ENCODE measurements at regions of chr7 and their contacts with region 1.

Region 1: DNA sequence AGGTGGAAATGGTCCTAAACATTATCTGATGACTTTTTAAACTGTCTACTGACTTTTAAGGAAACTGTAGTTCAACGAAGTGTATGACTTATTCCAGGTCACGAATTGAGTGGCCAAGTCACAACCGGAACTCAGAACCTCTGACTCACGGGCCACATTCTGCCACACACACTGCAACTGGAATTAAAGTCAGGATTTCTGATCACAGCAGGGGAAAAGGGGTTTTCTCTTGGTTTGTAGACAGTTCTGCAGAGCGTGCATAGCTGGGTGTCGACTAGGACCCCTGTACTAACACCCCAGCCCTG is 20.0 kb upstream of the INSIG1 start:
- DNase-seq: no peak
- ATAC-seq: no peak
- H3K4me3 ChIP-seq: no peak overlapping the region
- H3K4me3 Mint-ChIP-seq: no peak overlapping the region
- H3K27ac ChIP-seq: no peak overlapping the region
- H3K27ac Mint-ChIP-seq: no peak overlapping the region
- H3K4me1 ChIP-seq: no peaks in the 10 kb centered on the region
- H3K4me1 Mint-ChIP-seq: peaks cover 2 to 3% (median 3%) of the 10 kb centered on the region in 3 donors
- H3K27me3 ChIP-seq: peaks cover 0 to 28% of the 10 kb centered on the region in 2 experiments
- H3K27me3 Mint-ChIP-seq: peaks cover 0 to 7% of the 10 kb centered on the region in 2 donors

Region 2: DNA sequence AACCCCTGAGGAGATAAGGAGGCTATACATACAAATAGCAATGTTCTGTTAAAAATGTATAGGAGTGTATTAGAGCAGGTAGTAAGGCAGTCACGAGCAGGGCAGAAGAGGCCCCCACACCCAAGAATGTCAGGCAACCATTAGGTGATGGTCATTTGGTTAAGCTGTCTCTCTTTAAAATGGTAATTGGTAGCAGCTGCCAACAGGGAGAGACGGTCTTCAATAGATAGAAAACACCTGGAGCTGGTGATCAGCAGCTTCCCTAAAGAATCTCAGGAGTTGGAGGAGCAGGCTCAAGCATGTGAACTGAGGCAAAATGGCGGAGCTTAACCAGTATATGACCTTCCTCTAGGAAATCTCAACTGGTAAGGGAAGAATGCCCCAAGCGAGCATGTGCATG is 233.9 kb before region 1 on chr7:
- CTCF ChIA-PET with region 1: no interaction called
- POLR2A ChIA-PET with region 1: no interaction called
- DNase-seq: no peak
- ATAC-seq: no peak
- H3K4me3 ChIP-seq: no peak overlapping the region
- H3K4me3 Mint-ChIP-seq: no peak overlapping the region
- H3K27ac ChIP-seq: no peak overlapping the region
- H3K27ac Mint-ChIP-seq: no peak overlapping the region
- H3K4me1 ChIP-seq: no peaks in the 10 kb centered on the region
- H3K4me1 Mint-ChIP-seq: no peaks in the 10 kb centered on the region
- H3K27me3 ChIP-seq: peaks cover 0 to 9% of the 10 kb centered on the region in 2 experiments
- H3K27me3 Mint-ChIP-seq: peaks cover 28 to 30% of the 10 kb centered on the region in 2 donors

Region 3: DNA sequence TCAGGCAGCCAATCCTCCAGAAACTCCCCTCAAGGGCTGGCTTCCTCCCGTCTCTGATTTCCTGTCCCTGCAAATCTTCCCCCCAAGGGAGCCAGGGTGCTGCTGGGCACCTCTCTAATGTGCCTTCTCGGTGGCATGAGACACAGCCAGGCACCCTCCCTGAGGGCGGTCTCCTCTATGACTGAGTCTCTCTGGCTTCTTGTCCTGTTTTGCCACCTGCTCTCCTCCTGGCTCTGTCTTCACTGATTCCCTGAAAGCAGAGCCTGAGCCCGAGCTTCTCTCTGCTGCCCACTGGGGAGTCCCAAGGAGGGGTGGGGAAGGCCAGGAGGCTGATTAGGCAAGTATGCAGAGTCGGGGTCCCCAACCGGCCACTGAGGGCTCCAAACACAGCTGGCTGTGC is 40.3 kb before region 1 on chr7:
- CTCF ChIA-PET with region 1: no interaction called
- POLR2A ChIA-PET with region 1: no interaction called
- DNase-seq: no peak
- ATAC-seq: no peak
- H3K4me3 ChIP-seq: no peak overlapping the region
- H3K4me3 Mint-ChIP-seq: no peak overlapping the region
- H3K27ac ChIP-seq: no peak overlapping the region
- H3K27ac Mint-ChIP-seq: no peak overlapping the region
- H3K4me1 ChIP-seq: no peaks in the 10 kb centered on the region
- H3K4me1 Mint-ChIP-seq: peaks cover 0 to 7% (median 0%) of the 10 kb centered on the region in 3 donors
- H3K27me3 ChIP-seq: peaks cover 0 to 10% of the 10 kb centered on the region in 2 experiments
- H3K27me3 Mint-ChIP-seq: peaks cover 21 to 26% of the 10 kb centered on the region in 2 donors

Region 4: GRCh38 chr7:155774947-155775346 is 497.3 kb after region 1 on chr7:
- CTCF ChIA-PET with region 1: no interaction called
- POLR2A ChIA-PET with region 1: interaction called in 1 of 2 experiments, 12 read pairs
- DNase-seq: no peak
- ATAC-seq: no peak
- H3K4me3 ChIP-seq: no peak overlapping the region
- H3K4me3 Mint-ChIP-seq: no peak overlapping the region
- H3K27ac ChIP-seq: no peak overlapping the region
- H3K27ac Mint-ChIP-seq: no peak overlapping the region
- H3K4me1 ChIP-seq: no peaks in the 10 kb centered on the region
- H3K4me1 Mint-ChIP-seq: peaks cover 0 to 6% (median 0%) of the 10 kb centered on the region in 3 donors
- H3K27me3 ChIP-seq: no peaks in the 10 kb centered on the region
- H3K27me3 Mint-ChIP-seq: no peaks in the 10 kb centered on the region

Measured in T-cell (primary cell).